Right lobe of liver (tissue), 6 donors: ENCODE measurements at regions of chr1 and their contacts with region 1.

Region 1: GRCh38 chr1:15028102-15028501 is 125.4 kb upstream of the TMEM51 start:
- DNase-seq: no peak
- ATAC-seq: no peak
- H3K4me3 ChIP-seq: no peak overlapping the region
- H3K27ac ChIP-seq: no peak overlapping the region
- H3K4me1 ChIP-seq: peaks cover 0 to 21% (median 4%) of the 10 kb centered on the region in 4 donors
- H3K27me3 ChIP-seq: no peaks in the 10 kb centered on the region
- CTCF ChIP-seq: no peak
- POLR2A ChIP-seq: no peak

Region 2: GRCh38 chr1:14778898-14779865 is 248.9 kb before region 1 on chr1:
- intact Hi-C with region 1: loop called in 1 of 2 experiments (anchors 10 kb)
- DNase-seq: peak in 1 of 3 donors; percentile 42
- ATAC-seq: peak; percentile 40 to 64 (median 53)
- H3K4me3 ChIP-seq: no peak overlapping the region
- H3K27ac ChIP-seq: no peak overlapping the region
- H3K4me1 ChIP-seq: no peaks in the 10 kb centered on the region
- H3K27me3 ChIP-seq: no peaks in the 10 kb centered on the region
- CTCF ChIP-seq: peak; percentile 37 to 79 (median 62)
- POLR2A ChIP-seq: no peak